Activated T-helper 1 cell treated with anti-CD3 and anti-CD28 coated beads, Interleukin-12 subunit alpha, Interleukin-12 subunit beta, Interleukin-2, Interleukin-4 antibody, amounts not matched to agents 30 ng/mL and 10 ng/mL and 1 ng/mL, durations not matched to agents 14 hours and 24 hours and 36 hours (primary cell): ENCODE measurements at regions of chr4 and their contacts with region 1.

Region 1: DNA sequence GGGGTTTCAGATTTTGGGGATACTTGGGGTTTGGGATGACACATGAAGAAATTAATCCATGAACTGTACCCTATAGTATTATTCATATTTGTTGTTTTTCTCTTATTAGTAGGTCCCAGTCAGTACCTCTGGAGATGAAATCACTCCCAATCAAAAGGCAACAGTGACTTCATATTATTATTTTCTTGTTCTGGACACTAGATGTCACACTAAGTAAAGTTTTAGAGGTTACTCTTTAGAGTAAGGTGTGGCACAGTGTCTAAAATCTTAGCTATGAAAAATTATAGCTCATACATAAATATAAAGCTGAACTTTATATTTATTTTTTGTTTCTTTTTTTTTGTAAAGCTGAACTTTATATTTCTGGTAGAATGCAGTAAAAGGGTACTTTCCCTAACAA is 35.1 kb downstream of the FAM114A1 start:
- DNase-seq: no peak
- H3K4me3 Mint-ChIP-seq: no peak overlapping the region
- H3K27ac Mint-ChIP-seq: no peak overlapping the region
- H3K4me1 Mint-ChIP-seq: peaks cover 35% of the 10 kb centered on the region
- H3K27me3 Mint-ChIP-seq: peaks cover 10% of the 10 kb centered on the region

Region 2: GRCh38 chr4:38743866-38744265 is 158.8 kb before region 1 on chr4:
- intact Hi-C with region 1: no loop called
- DNase-seq: no peak
- H3K4me3 Mint-ChIP-seq: no peak overlapping the region
- H3K27ac Mint-ChIP-seq: no peak overlapping the region
- H3K4me1 Mint-ChIP-seq: peaks cover 16% of the 10 kb centered on the region
- H3K27me3 Mint-ChIP-seq: peaks cover 9% of the 10 kb centered on the region

Region 3: DNA sequence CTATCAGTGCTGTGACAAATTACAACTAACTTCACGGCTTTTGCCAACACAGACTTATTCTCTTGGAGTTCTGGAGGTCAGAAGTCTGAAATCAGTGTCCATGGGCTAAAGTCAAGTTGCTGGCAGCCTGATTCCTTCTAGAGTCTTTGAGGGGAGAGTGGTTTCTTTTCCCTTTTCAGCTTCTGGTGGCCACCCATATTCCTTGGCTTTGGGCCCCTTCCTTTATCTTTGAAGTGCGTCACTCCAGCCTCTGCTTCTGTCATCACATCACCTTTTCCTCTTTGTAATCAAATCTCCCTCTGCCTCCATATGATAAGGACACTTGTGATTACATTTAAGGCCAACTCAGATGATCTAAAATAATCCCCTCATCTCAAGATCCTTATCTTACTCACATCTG is 26.1 kb before region 1 on chr4:
- intact Hi-C with region 1: no loop called
- DNase-seq: no peak
- H3K4me3 Mint-ChIP-seq: no peak overlapping the region
- H3K27ac Mint-ChIP-seq: no peak overlapping the region
- H3K4me1 Mint-ChIP-seq: no peaks in the 10 kb centered on the region
- H3K27me3 Mint-ChIP-seq: peaks cover 23% of the 10 kb centered on the region

Region 4: DNA sequence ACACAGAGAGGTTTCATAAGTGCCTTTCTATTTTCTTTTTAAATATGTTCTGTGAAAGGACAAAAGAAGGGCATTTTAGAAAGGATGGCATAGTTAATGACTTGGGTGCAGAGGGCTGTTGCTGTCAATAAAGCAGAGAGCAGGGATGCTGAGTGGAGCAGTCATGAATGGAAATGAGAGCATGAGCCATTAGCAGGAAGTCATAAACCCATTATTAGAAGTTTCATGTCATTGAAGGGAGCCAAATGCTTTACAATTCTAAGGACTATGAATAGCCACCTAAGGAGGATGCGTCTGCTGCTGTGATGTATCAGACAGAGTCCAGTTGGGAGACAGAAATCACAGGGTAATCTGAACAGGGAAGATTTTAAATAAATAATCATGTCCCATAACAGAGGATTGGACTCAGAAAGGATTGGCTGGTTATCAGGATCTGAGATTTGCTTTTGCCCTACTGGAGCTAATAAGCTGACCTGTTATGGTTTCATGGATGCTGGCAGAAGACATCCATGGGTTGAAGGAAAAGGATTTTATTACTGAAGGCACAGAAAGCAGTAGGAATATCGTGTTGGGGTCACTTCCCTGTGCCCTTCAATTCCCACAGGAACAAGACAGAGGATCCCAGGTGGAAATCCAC is 232.1 kb after region 1 on chr4:
- intact Hi-C with region 1: loop called (anchors 1 kb)
- DNase-seq: no peak
- H3K4me3 Mint-ChIP-seq: no peak overlapping the region
- H3K27ac Mint-ChIP-seq: no peak overlapping the region
- H3K4me1 Mint-ChIP-seq: peaks cover 19% of the 10 kb centered on the region
- H3K27me3 Mint-ChIP-seq: no peaks in the 10 kb centered on the region